Activated T-helper 2 cell treated with anti-CD3 and anti-CD28 coated beads, Interferon-gamma antibody, Interleukin-2, Interleukin-4, amounts not matched to agents 10 μg/mL and 5 μg/mL and 100 μg/mL, durations not matched to agents 14 hours and 24 hours and 36 hours (primary cell): ENCODE measurements at regions of chr16 and their contacts with region 1.

Region 1: GRCh38 chr16:3611146-3611975 is at the start of gene SLX4:
- DNase-seq: peak; percentile 93
- H3K4me3 Mint-ChIP-seq: peak within 1 kb of the TSS; percentile 100
- H3K27ac Mint-ChIP-seq: peak within 1 kb of the TSS; percentile 96
- H3K4me1 Mint-ChIP-seq: peaks cover 43% of the 10 kb centered on the region
- H3K27me3 Mint-ChIP-seq: no peaks in the 10 kb centered on the region
- total RNA-seq, gene SLX4: 11.8 and 12.2 TPM in 2 replicates

Region 2: GRCh38 chr16:3328643-3329042 is 282.7 kb before region 1 on chr16:
- intact Hi-C with region 1: no loop called
- DNase-seq: no peak
- H3K4me3 Mint-ChIP-seq: no peak overlapping the region
- H3K27ac Mint-ChIP-seq: no peak overlapping the region
- H3K4me1 Mint-ChIP-seq: no peaks in the 10 kb centered on the region
- H3K27me3 Mint-ChIP-seq: no peaks in the 10 kb centered on the region

Region 3: DNA sequence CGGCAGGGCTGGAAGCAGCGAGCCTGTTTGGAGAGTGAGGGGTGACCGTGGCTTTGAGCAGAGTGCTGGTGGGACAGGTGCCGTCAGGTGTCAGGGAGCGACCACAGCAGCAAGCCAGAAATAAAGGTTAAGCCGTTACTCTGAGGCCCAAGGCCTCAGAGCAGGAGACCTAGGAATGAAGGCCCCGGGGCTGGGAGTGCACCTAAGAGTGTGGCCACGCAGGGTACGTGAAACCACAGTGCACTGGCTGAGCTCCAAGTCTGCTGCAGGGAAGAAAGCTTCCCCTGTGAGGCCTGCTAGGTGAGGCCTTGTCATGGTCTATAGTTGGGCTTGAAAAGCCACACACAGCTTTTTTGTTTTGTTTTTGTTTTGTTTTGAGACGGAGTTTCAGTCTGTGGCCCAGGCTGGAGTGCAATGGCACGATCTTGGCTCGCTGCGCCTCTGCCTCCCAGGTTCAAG is 101.9 kb before region 1 on chr16:
- intact Hi-C with region 1: loop called (anchors 10 kb)
- DNase-seq: peak; percentile 59
- H3K4me3 Mint-ChIP-seq: no peak overlapping the region
- H3K27ac Mint-ChIP-seq: peak overlapping the region; percentile 74
- H3K4me1 Mint-ChIP-seq: peaks cover 52% of the 10 kb centered on the region
- H3K27me3 Mint-ChIP-seq: no peaks in the 10 kb centered on the region

Region 4: GRCh38 chr16:3578610-3579551 is 32.5 kb before region 1 on chr16:
- intact Hi-C with region 1: loop called (anchors 1 kb)
- DNase-seq: peak; percentile 67
- H3K4me3 Mint-ChIP-seq: peak overlapping the region; percentile 91
- H3K27ac Mint-ChIP-seq: peak overlapping the region; percentile 96
- H3K4me1 Mint-ChIP-seq: peaks cover 38% of the 10 kb centered on the region
- H3K27me3 Mint-ChIP-seq: no peaks in the 10 kb centered on the region